Gastrocnemius medialis (tissue), 4 donors: ENCODE measurements at regions of chr10 and their contacts with region 1.

Region 1: DNA sequence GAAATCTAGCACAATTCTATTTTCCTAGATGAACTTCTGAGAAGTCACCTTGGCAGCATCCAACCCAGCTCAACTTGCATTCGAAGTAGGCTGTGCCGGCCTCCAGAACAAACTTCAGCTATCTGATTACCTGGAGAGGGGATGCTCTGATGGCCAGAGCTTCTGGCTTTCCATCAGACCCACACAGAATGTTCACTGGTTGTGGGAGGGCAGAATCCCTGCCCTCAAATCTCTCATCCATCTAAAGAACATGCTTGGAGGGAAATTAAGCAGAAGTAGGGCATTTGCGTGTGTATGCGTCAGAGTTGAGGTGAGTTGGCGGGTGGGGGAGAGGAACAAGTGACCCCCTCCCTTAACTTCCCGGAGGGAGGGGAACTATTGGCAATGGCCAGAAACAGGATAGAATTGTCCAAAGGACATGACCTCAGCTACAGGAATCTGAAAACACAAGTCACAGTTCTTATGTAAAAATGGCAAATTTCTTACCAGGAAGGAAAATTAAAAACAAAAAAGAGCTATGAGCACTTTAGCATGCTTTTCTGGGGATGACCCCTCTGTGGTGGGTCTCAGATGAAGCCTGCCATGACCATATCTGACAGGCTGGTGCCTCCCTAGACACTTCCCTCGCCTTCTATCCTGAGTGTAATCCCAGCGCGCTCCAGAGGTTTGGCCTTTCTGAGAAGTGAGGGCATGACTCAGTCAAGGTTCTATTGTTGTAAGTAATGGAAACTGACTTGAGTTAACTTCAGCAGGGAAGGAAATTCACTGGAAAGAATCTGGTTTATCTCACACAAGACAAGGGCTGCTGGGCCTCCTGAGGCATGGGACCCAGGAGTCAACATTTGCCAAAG is 278.8 kb downstream of the RPS24 start:
- DNase-seq: no peak
- ATAC-seq: no peak
- H3K4me3 ChIP-seq: no peak overlapping the region
- H3K27ac ChIP-seq: no peak overlapping the region
- H3K4me1 ChIP-seq: peaks cover 7 to 9% of the 10 kb centered on the region in 2 donors
- H3K27me3 ChIP-seq: no peaks in the 10 kb centered on the region
- CTCF ChIP-seq: no peak
- POLR2A ChIP-seq: no peak

Region 2: GRCh38 chr10:79206300-79207095 is 894.1 kb after region 1 on chr10:
- in situ Hi-C with region 1: no loop called
- intact Hi-C with region 1: loop called (anchors 5 kb)
- DNase-seq: no peak
- ATAC-seq: no peak
- H3K4me3 ChIP-seq: no peak overlapping the region
- H3K27ac ChIP-seq: no peak overlapping the region
- H3K4me1 ChIP-seq: no peaks in the 10 kb centered on the region
- H3K27me3 ChIP-seq: no peaks in the 10 kb centered on the region
- CTCF ChIP-seq: no peak
- POLR2A ChIP-seq: no peak